ENCODE measurements at regions of chr18 and their contacts with region 1.

Region 1: DNA sequence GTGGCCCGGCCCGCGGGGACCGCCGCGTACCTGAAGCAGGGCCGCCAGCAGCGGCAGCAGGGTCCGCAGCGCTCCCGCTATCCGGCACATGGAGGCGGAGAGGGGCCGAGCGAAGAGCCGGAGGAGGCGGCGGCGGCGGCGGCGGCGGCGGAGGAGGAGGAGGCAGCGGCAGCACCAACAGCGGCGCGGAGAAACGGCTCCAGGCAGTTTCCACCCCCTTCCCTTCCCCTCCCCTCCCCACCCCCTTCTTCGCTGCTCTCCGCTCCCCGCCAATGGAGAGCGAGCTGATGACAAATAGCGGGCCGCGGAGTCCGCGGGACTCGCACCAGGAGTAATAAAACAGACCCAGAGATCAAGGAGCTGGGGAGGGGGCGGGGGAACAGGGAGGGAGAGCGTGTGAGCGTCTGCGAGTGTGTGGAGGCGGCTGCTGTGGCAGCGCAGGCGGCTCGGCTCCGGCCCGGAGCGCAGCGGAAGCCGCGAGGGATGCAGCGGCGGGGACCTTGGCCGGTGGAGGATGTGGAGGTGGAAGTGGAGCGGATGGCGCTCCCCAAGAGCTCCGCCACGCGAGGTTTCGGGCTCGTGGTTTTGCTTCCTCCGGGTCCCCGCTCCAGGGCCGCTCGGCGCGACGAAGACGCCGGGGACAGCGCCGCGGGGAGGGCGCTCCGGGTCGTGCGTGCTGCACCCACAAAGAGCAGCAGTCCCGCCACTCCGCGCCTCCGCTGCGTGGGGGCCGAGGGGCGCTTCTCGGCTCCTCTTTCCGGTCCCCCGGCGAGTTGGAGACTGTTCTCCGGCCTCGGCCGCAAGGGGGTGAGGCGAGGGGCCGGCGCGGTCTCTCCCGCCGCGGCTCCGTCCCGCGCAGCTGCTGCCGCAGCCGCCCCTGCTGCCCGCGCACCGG is at the start of gene CDH2:
- DNase-seq: peak; percentile 54 to 94 (median 70)

Region 2: GRCh38 chr18:27605107-27605834 is 571.9 kb before region 1 on chr18:
- intact Hi-C with region 1: loop called (anchors 10 kb)
- DNase-seq: peak in 7 of 10 donors; percentile 21 to 89 (median 60)

Region 3: DNA sequence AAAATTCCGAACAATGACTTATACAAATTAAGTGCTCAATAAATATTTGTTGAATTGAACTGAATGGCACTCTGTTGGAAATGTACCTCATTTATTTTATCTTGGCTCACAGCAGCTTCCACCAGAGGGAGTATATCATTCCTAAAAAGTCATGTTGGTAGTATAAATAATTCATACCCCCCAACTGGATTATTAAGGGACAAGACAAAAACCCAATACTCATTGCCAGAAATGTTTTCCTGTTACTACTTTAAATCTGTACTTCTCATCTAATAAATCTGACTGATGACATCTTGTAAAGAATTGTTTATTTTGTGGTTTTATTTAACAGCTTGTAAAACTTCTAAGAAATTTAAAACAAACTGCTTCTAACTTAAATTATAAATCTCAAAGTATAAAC is 164.1 kb before region 1 on chr18:
- intact Hi-C with region 1: loop called (anchors 5 kb)
- DNase-seq: no peak

Region 4: DNA sequence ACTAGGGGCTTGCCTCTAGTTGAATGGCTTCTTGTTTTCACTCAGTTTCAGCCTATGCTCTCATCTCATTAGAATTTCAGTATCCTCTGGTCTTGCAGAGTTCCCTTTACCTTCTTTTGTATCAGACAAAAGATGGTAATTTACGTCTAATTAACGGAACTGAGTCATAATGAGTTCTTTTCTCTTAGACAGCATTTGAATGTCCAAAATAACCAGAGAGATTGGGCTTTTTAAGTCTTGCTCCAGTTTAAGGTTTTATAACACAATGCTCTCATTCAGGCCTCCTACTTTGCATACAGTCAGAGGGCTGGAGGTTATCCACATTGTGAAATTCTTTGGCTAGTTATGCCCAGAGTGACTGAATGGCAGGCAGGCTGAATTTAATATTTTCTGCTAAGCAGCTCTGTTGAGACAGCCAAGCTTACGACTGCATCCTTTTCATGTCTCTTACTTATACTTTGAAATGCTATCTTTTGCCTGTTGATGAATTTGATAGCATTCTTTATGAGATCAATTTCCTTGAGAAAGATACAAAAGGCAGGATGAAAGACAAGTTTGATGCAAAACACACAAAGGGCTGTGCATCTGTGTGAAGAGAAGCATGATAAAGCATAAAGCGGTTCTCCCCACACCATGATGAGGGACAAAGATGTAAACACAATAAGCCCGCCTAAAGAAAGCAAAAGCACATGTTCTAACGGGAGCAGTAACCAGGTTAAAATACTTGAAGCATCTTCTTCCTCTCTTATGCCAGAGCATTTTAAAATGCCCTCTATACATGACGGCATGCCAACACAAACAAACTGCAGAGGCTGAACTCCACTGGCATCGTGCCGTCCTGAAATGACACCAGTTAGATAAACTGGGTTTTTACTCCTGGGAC is 90.3 kb before region 1 on chr18:
- intact Hi-C with region 1: loop called (anchors 5 kb)
- DNase-seq: peak in 3 of 10 donors; percentile 37 to 66 (median 40)

Region 5: DNA sequence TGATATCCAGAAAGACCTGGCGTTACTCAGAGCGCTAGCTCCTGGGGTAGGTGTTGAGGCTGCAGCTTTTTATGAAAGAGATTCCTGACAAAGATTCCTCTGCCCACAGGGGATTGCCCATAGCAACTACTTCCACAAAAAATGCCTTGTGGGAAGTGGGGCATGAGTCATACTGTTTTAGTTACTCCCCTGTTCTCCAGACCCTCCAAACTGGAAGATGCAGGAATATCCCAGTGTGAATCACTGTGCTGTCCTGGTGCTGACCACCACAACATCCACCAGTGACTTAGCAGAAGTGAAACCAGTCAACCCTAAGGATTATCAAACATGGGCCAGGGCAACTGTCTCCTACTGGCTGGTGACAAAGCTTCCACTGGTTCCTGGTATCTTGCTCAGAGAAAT is 62.0 kb before region 1 on chr18:
- intact Hi-C with region 1: no loop called
- DNase-seq: peak in 1 of 10 donors; percentile 47

Region 6: DNA sequence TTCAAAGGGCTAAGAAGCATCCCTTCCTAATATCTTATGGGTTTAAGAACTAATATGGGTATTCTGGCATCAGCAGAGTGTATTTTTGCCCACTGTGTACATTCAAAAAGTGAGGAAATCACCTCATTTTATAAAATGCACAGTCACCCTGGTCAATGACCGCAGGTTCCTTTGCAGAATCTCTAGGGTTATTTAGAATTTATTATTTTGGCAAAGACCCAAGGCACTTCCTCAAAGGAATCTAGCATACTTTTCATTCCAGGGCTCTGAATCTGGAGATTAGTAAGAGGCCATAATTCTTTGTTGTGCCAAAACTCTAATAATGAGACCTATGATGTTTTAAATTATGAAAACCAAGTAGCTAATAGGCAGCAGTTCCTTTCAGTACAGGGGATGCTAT is 27.0 kb after region 1 on chr18:
- intact Hi-C with region 1: no loop called
- DNase-seq: no peak